Mammary epithelial cell (primary cell): ENCODE measurements at regions of chr20 and their contacts with region 1.

Region 1: DNA sequence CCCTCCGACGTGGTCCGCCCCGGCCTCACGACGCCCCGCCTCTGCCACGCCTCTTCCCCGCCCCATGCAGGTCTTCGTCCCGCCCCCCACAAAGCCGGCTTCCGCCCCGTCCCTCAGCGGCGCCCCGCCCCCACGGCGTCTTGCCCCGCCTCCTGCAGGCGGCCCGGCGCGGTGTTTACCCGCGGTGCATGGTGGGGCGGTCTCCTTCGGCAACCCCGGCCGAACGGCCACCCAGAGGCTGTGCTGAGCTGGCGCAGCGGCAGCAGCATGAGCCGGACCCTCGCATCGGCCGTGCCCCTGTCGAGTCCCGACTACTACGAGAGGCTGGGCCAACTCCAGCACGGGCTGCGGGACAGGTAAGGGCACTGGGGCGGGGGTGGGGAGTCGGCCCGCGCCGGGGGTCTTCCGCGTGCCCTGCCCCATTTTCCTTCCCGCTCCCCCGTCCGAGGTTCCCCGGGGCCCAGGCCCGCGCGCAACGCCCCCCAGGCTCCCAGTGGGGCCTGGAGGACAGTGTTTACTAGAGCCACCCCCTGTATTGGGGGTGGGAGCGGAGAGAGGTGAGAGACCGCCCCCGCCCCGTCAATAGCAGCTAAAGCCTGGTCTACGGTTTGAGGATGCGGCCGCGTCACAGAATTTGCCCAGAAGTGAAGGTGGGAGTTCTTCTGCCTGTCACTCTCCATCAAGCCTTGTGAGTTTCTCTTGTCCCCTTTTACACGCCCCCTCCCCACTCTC is at the start of gene KIZ:
- DNase-seq: peak; percentile 93
- H3K4me3 ChIP-seq: peak within 1 kb of the TSS; percentile 70 to 86 (median 79)
- H3K27ac ChIP-seq: peak within 1 kb of the TSS; percentile 57
- H3K4me1 ChIP-seq: peaks cover 7% of the 10 kb centered on the region
- H3K27me3 ChIP-seq: no peaks in the 10 kb centered on the region
- CTCF ChIP-seq: peak; percentile 28 to 45
- total RNA-seq, gene KIZ: 18.3 to 56.1 TPM

Region 2: GRCh38 chr20:21099751-21100577 is 26.1 kb before region 1 on chr20:
- CTCF ChIA-PET with region 1: no interaction called
- dilution Hi-C with region 1: no loop called
- in situ Hi-C with region 1: no loop called
- intact Hi-C with region 1: loop called (anchors 1 kb)
- DNase-seq: no peak
- H3K4me3 ChIP-seq: peak overlapping the region; percentile 34 to 44 (median 40)
- H3K27ac ChIP-seq: no peak overlapping the region
- H3K4me1 ChIP-seq: peaks cover 15% of the 10 kb centered on the region
- H3K27me3 ChIP-seq: peaks cover 57% of the 10 kb centered on the region
- CTCF ChIP-seq: no peak